Colonic mucosa (tissue), 4 donors: ENCODE measurements at regions of chr15 and their contacts with region 1.

Region 1: GRCh38 chr15:38072348-38073177 is 138.1 kb downstream of the TMCO5A start:
- DNase-seq: peak; percentile 82
- H3K4me3 ChIP-seq: peak overlapping the region; percentile 37
- H3K27ac ChIP-seq: peak overlapping the region; percentile 84
- H3K4me1 ChIP-seq: peaks cover 5% of the 10 kb centered on the region
- H3K27me3 ChIP-seq: no peaks in the 10 kb centered on the region
- CTCF ChIP-seq: no peak

Region 2: GRCh38 chr15:38129531-38130204 is 57.1 kb after region 1 on chr15:
- intact Hi-C with region 1: loop called (anchors 10 kb)
- DNase-seq: peak; percentile 64
- H3K4me3 ChIP-seq: no peak overlapping the region
- H3K27ac ChIP-seq: peak overlapping the region; percentile 52
- H3K4me1 ChIP-seq: peaks cover 3% of the 10 kb centered on the region
- H3K27me3 ChIP-seq: no peaks in the 10 kb centered on the region
- CTCF ChIP-seq: no peak

Region 3: GRCh38 chr15:38252481-38253412 is 180.2 kb after region 1 on chr15 and contains the start of gene SPRED1:
- intact Hi-C with region 1: loop called (anchors 10 kb)
- DNase-seq: peak; percentile 70
- H3K4me3 ChIP-seq: peak within 1 kb of the TSS; percentile 75
- H3K27ac ChIP-seq: peak within 1 kb of the TSS; percentile 99
- H3K4me1 ChIP-seq: no peaks in the 10 kb centered on the region
- H3K27me3 ChIP-seq: no peaks in the 10 kb centered on the region
- CTCF ChIP-seq: no peak
- total RNA-seq, gene SPRED1: 26.8 to 28.0 TPM

Region 4: GRCh38 chr15:38479266-38479665 is 406.7 kb after region 1 on chr15:
- intact Hi-C with region 1: no loop called
- DNase-seq: no peak
- H3K4me3 ChIP-seq: no peak overlapping the region
- H3K27ac ChIP-seq: no peak overlapping the region
- H3K4me1 ChIP-seq: peaks cover 6% of the 10 kb centered on the region
- H3K27me3 ChIP-seq: no peaks in the 10 kb centered on the region
- CTCF ChIP-seq: no peak